B cell (primary cell): ENCODE measurements at regions of chr3 and their contacts with region 1.

Region 1: GRCh38 chr3:132722164-132723024 is at the start of gene NPHP3:
- DNase-seq: peak; percentile 93
- ATAC-seq: peak; percentile 79
- H3K4me3 ChIP-seq: peak within 1 kb of the TSS; percentile 51 to 93 (median 69)
- H3K4me3 Mint-ChIP-seq: peak within 1 kb of the TSS; percentile 92
- H3K27ac ChIP-seq: peak within 1 kb of the TSS; percentile 54 to 65
- H3K27ac Mint-ChIP-seq: peak within 1 kb of the TSS; percentile 93
- H3K4me1 ChIP-seq: peaks cover 17 to 20% of the 10 kb centered on the region in 2 donors
- H3K4me1 Mint-ChIP-seq: peaks cover 31% of the 10 kb centered on the region
- H3K27me3 ChIP-seq: no peaks in the 10 kb centered on the region
- H3K27me3 Mint-ChIP-seq: peaks cover 4% of the 10 kb centered on the region
- CTCF ChIP-seq: no peak
- total RNA-seq, gene NPHP3: 47.8 and 48.7 TPM in 2 replicates

Region 2: DNA sequence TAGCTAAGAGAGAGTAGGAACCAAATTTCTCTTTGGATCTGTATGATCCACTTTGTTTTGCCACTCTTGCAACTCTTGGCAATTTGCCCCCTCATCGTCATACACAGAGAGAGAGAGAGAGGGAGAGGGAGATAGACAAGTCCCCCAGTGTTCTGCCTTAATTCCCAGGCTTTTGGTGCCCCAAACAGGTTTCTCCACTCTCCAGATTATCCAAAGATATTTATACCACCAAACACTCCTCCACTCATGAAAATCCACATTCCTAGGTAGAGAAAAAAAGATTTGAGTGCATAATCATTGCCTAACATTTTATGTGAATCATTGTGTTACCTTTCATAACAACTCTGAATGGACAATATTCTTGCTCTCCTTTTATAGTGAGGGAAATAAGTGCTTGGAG is 389.9 kb before region 1 on chr3:
- CTCF ChIA-PET with region 1: no interaction called
- POLR2A ChIA-PET with region 1: no interaction called
- intact Hi-C with region 1: no loop called
- DNase-seq: no peak
- ATAC-seq: no peak
- H3K4me3 ChIP-seq: no peak overlapping the region
- H3K4me3 Mint-ChIP-seq: no peak overlapping the region
- H3K27ac ChIP-seq: no peak overlapping the region
- H3K27ac Mint-ChIP-seq: no peak overlapping the region
- H3K4me1 ChIP-seq: no peaks in the 10 kb centered on the region
- H3K4me1 Mint-ChIP-seq: no peaks in the 10 kb centered on the region
- H3K27me3 ChIP-seq: no peaks in the 10 kb centered on the region
- H3K27me3 Mint-ChIP-seq: peaks cover 5% of the 10 kb centered on the region
- CTCF ChIP-seq: no peak

Region 3: GRCh38 chr3:132416807-132417694 is 305.3 kb before region 1 on chr3 and contains the start of gene DNAJC13:
- CTCF ChIA-PET with region 1: no interaction called
- POLR2A ChIA-PET with region 1: no interaction called
- intact Hi-C with region 1: loop called (anchors 1 kb)
- DNase-seq: peak; percentile 99
- ATAC-seq: peak; percentile 87
- H3K4me3 ChIP-seq: peak within 1 kb of the TSS; percentile 84 to 99 (median 93)
- H3K4me3 Mint-ChIP-seq: peak within 1 kb of the TSS; percentile 100
- H3K27ac ChIP-seq: peak within 1 kb of the TSS; percentile 87 to 90
- H3K27ac Mint-ChIP-seq: peak within 1 kb of the TSS; percentile 98
- H3K4me1 ChIP-seq: peaks cover 12 to 13% of the 10 kb centered on the region in 2 donors
- H3K4me1 Mint-ChIP-seq: peaks cover 34% of the 10 kb centered on the region
- H3K27me3 ChIP-seq: no peaks in the 10 kb centered on the region
- H3K27me3 Mint-ChIP-seq: no peaks in the 10 kb centered on the region
- CTCF ChIP-seq: no peak
- total RNA-seq, gene DNAJC13: 51.1 and 56.0 TPM in 2 replicates

Region 4: GRCh38 chr3:132756108-132756650 is 33.8 kb after region 1 on chr3:
- CTCF ChIA-PET with region 1: no interaction called
- POLR2A ChIA-PET with region 1: no interaction called
- intact Hi-C with region 1: no loop called
- DNase-seq: no peak
- ATAC-seq: no peak
- H3K4me3 ChIP-seq: no peak overlapping the region
- H3K4me3 Mint-ChIP-seq: no peak overlapping the region
- H3K27ac ChIP-seq: no peak overlapping the region
- H3K27ac Mint-ChIP-seq: no peak overlapping the region
- H3K4me1 ChIP-seq: no peaks in the 10 kb centered on the region
- H3K4me1 Mint-ChIP-seq: no peaks in the 10 kb centered on the region
- H3K27me3 ChIP-seq: peaks cover 0 to 6% (median 2%) of the 10 kb centered on the region in 4 experiments
- H3K27me3 Mint-ChIP-seq: peaks cover 26% of the 10 kb centered on the region
- CTCF ChIP-seq: no peak

Region 5: DNA sequence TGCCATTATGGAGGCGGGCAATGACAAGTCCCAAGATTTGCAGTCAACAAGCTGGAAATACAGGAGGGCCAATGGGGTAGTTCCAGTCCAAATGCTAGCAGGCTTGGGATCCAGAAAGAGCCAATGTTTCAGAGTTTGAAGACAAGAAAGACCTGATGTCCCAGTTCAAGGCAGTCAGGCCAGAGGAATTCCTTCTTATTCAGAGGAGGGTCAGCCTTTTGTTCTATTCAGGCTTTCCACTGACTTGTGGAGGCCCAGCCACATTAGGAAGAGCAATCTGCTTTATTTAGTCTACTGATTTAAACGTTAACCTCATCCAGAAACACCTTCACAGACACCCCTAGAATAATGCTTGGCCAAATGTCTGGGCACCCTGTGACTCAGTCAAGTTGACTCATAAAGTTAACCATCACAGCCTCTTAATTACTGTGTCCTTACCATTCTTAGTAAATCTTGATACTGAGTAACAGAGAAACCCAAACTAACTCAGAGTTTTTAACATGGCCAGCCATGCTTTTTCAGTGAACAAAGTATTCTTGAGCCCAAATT is 50.8 kb after region 1 on chr3:
- CTCF ChIA-PET with region 1: no interaction called
- POLR2A ChIA-PET with region 1: no interaction called
- intact Hi-C with region 1: no loop called
- DNase-seq: no peak
- ATAC-seq: no peak
- H3K4me3 ChIP-seq: no peak overlapping the region
- H3K4me3 Mint-ChIP-seq: no peak overlapping the region
- H3K27ac ChIP-seq: no peak overlapping the region
- H3K27ac Mint-ChIP-seq: no peak overlapping the region
- H3K4me1 ChIP-seq: no peaks in the 10 kb centered on the region
- H3K4me1 Mint-ChIP-seq: no peaks in the 10 kb centered on the region
- H3K27me3 ChIP-seq: peaks cover 0 to 5% (median 2%) of the 10 kb centered on the region in 4 experiments
- H3K27me3 Mint-ChIP-seq: peaks cover 7% of the 10 kb centered on the region
- CTCF ChIP-seq: no peak

Region 6: DNA sequence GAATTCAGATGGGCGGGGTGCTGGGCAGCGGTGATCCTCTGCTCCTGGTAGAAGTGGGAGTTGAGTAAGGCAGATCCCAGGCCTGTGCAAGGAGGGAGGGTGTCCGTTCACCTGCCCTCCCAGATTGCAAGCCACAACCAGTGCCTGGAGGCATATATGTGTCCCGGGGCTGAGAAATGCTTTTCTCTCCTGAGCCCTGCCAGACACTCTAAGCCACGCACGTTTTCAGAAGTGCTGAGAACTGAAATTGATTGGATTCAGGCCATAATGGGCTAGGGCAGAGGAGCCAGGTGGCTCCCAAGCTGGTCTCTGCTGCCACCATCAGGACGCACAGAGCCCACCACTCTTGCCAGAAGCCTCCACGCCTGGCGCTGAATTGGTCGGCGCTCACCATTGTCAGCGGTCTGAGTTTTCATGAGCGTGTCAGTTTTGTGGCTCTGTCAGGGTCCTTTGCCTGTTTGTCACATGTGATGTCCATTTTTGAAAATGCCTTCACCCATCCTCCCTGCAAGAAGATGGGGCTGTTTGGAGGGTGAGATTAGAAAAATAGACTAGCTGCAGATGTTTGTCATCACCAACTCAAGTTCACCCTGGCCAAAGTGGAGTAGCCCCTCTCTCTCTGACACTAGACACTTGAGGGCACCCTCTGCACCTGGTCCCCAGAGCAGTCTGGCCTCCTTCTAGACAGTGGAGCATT is 662.1 kb after region 1 on chr3:
- CTCF ChIA-PET with region 1: interaction called, 11 read pairs
- POLR2A ChIA-PET with region 1: no interaction called
- intact Hi-C with region 1: loop called (anchors 2 kb)
- DNase-seq: peak; percentile 44
- ATAC-seq: peak; percentile 54
- H3K4me3 ChIP-seq: no peak overlapping the region
- H3K4me3 Mint-ChIP-seq: no peak overlapping the region
- H3K27ac ChIP-seq: no peak overlapping the region
- H3K27ac Mint-ChIP-seq: no peak overlapping the region
- H3K4me1 ChIP-seq: peaks cover 0 to 3% of the 10 kb centered on the region in 2 donors
- H3K4me1 Mint-ChIP-seq: peaks cover 2% of the 10 kb centered on the region
- H3K27me3 ChIP-seq: peaks cover 0 to 3% (median 0%) of the 10 kb centered on the region in 4 experiments
- H3K27me3 Mint-ChIP-seq: no peaks in the 10 kb centered on the region
- CTCF ChIP-seq: peak; percentile 48

Region 7: DNA sequence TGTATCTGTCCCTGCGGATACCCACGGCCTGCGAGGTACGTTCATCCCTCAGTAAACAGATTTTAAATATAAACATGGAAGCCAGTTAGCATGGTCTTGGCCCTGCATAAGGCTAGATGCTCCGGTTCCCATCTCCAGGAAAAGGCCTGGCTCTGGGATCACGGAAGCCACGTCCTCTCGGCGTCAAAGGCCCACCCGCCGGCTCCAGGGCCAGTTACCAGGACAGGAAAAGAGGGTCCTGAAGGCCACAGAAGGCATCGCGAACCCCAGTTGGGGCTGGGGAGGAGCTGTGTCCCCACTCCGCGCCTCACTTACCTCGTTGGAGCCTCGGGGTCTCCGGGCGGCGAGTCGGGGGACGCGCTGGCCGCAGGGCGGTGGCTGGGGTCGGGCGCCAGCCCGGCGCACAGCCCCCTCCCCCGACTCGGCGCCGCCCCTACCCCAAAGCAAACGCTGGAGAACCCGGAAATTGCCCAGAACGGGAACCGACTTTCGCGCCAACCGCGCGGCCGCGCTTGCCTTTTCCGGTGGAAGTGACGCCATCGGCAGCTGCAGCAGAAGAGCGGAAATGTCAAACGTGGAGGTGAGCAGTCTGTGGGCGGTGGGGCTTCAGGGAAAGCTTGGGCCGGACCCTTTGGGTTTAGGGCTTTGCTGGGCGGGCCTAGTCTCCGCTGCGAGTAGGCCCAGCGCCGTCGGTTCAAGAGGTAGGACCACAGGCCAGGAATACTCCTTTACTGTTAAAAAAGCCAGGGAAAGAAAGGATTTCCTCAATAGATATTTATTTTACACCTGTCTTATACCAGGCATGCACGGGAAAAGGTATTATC is 939.3 kb after region 1 on chr3 and contains the start of gene TOPBP1:
- CTCF ChIA-PET with region 1: no interaction called
- POLR2A ChIA-PET with region 1: no interaction called
- intact Hi-C with region 1: loop called (anchors 2 kb)
- DNase-seq: peak; percentile 88
- ATAC-seq: peak; percentile 84
- H3K4me3 ChIP-seq: peak within 1 kb of the TSS; percentile 74 to 95 (median 91)
- H3K4me3 Mint-ChIP-seq: peak within 1 kb of the TSS; percentile 98
- H3K27ac ChIP-seq: peak within 1 kb of the TSS; percentile 67 to 87
- H3K27ac Mint-ChIP-seq: peak within 1 kb of the TSS; percentile 95
- H3K4me1 ChIP-seq: peaks cover 19 to 26% of the 10 kb centered on the region in 2 donors
- H3K4me1 Mint-ChIP-seq: peaks cover 41% of the 10 kb centered on the region
- H3K27me3 ChIP-seq: no peaks in the 10 kb centered on the region
- H3K27me3 Mint-ChIP-seq: no peaks in the 10 kb centered on the region
- CTCF ChIP-seq: no peak
- total RNA-seq, gene TOPBP1: 47.7 and 53.7 TPM in 2 replicates

Region 8: DNA sequence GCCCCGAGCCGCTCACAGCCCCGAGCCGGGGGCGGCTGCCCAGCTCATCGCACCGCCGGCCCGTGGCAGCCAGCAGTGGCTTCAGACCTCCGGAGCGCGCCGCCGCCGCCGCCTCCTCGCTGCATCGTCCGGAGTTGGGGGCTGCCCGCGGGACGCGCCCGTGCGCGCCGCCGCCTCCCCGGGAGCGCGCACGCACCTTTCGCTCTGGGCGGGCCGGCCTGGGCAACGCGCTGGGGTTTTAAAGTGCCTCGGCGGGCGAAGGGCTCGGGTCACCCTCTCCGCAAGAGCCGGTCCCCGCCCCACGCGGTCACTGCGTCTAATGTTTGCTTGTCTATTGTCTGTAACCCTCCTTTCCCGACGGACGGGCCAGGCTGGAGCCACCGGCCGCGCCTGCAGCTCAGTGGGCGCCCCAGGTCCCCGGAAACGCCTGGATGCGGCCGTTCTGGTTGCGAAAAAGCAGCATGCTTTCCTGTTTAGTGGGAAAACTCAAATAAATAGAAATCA is 1528.4 kb after region 1 on chr3 and contains the start of gene RYK:
- CTCF ChIA-PET with region 1: no interaction called
- POLR2A ChIA-PET with region 1: no interaction called
- intact Hi-C with region 1: loop called (anchors 10 kb)
- DNase-seq: peak; percentile 90
- ATAC-seq: peak; percentile 73
- H3K4me3 ChIP-seq: peak within 1 kb of the TSS; percentile 69 to 90 (median 74)
- H3K4me3 Mint-ChIP-seq: peak within 1 kb of the TSS; percentile 93
- H3K27ac ChIP-seq: peak within 1 kb of the TSS; percentile 71 to 82
- H3K27ac Mint-ChIP-seq: peak within 1 kb of the TSS; percentile 93
- H3K4me1 ChIP-seq: peaks cover 29 to 30% of the 10 kb centered on the region in 2 donors
- H3K4me1 Mint-ChIP-seq: peaks cover 49% of the 10 kb centered on the region
- H3K27me3 ChIP-seq: no peaks in the 10 kb centered on the region
- H3K27me3 Mint-ChIP-seq: no peaks in the 10 kb centered on the region
- CTCF ChIP-seq: no peak
- total RNA-seq, gene RYK: 63.9 and 67.7 TPM in 2 replicates